ENCODE measurements at regions of chr3 and their contacts with region 1.

Region 1: GRCh38 chr3:129824926-129825541 is 68.5 kb downstream of the TMCC1 start:
- DNase-seq: peak in 1 of 3 donors; percentile 24
- ATAC-seq: peak; percentile 81
- H3K4me3 ChIP-seq: no peak overlapping the region
- H3K4me1 ChIP-seq: no peaks in the 10 kb centered on the region
- CTCF ChIP-seq: peak; percentile 15

Region 2: DNA sequence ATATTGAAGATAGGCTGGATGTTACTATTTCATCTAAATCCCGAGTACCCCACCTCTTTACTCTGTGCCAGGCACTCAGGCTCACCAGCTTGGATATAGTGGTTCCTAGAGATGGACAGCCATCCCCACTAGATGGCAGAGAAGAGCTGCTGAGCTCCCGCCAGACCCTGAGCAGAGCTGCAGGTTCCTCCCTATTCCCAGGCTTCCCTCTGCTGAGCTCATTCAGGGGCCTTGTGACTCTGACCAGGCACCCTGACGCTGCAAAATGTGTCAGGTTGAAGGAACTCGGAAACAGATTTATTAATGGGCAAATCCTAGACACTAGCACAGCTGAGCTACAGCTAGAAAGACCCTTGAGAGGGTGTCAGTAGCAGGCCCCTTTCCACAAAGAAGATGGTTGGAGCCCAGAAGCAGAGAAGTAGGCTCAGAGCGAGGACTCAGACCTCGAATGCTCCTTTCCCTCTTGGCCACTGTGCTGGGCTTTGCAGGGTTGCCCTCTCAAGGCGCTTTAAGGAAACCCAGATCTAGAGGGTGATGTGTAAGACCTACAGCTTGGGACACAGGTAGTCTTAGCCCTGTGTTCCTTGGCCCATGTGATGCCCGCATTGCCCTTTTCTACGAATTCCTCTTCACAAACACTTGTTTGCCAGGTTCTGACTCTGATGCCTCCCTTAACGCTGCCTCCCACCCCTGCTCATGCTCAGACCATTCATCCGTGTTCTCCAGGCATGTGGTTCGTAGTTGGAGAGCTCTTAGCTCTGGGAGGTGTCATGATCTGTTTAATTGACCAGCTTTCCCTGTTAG is 334.6 kb before region 1 on chr3:
- intact Hi-C with region 1: loop called in 1 of 2 experiments (anchors 5 kb)
- DNase-seq: peak; percentile 73 to 82 (median 79)
- ATAC-seq: peak; percentile 92
- H3K4me3 ChIP-seq: no peak overlapping the region
- H3K4me1 ChIP-seq: no peaks in the 10 kb centered on the region
- CTCF ChIP-seq: peak; percentile 50

Region 3: GRCh38 chr3:129650256-129650872 is 174.7 kb before region 1 on chr3:
- intact Hi-C with region 1: loop called (anchors 5 kb)
- DNase-seq: peak in 2 of 3 donors; percentile 39 to 82
- ATAC-seq: peak; percentile 69
- H3K4me3 ChIP-seq: no peak overlapping the region
- H3K4me1 ChIP-seq: no peaks in the 10 kb centered on the region
- CTCF ChIP-seq: peak; percentile 14

Measured in mucosa of descending colon (tissue), 3 donors.